Heart left ventricle (tissue), 16 donors: ENCODE measurements at regions of chr5 and their contacts with region 1.

Region 1: DNA sequence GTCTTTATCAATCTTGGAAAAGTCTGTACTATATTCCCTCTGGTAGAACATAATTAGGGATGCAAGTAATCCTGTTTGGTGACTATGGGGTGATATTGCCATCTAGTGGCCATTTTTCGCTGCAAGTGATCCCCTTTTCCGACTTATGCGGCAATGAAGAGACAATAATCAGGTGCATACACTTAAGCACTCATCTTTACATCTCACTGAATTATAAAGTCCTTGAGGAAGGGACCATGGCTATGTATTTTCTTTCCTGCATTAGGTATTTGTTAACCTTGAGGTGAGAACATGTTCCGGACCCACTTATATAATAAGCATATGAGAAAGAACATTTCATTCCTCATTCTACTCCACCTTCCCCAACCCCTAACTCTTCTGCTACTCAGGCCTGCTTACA is 19.6 kb upstream of the LIX1 start:
- DNase-seq: peak in 3 of 5 donors; percentile 33 to 59 (median 44)
- ATAC-seq: peak in 3 of 4 donors; percentile 71 to 77 (median 76)
- H3K4me3 ChIP-seq: no peak overlapping the region
- H3K27ac ChIP-seq: no peak overlapping the region
- H3K4me1 ChIP-seq: peaks cover 0 to 6% (median 0%) of the 10 kb centered on the region in 12 donors
- H3K27me3 ChIP-seq: no peaks in the 10 kb centered on the region
- CTCF ChIP-seq: peak; percentile 81 to 95 (median 89)
- POLR2A ChIP-seq: no peak

Region 2: DNA sequence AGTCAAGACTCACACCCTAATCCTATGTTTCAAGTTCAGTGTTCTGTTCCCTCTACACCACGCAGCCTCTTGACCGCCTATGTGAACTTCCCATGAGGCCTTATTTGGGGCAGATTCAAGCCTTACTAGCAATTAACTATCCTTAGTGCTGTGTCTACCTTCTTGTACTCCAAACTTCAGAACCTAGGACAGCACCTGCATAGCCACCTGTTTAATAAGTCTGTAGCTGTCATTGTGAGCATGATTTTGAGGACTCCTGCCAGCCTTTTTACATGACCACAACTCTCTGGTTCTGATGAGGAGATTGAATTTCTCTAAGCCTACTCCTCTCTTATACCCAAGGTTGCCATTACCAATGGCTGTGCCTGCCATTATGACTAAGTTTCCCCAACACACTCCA is 678.2 kb before region 1 on chr5:
- intact Hi-C with region 1: no loop called
- DNase-seq: no peak
- ATAC-seq: peak in 1 of 4 donors; percentile 45
- H3K4me3 ChIP-seq: no peak overlapping the region
- H3K27ac ChIP-seq: no peak overlapping the region
- H3K4me1 ChIP-seq: no peaks in the 10 kb centered on the region
- H3K27me3 ChIP-seq: no peaks in the 10 kb centered on the region
- CTCF ChIP-seq: no peak
- POLR2A ChIP-seq: no peak

Region 3: GRCh38 chr5:96601811-96602244 is 560.2 kb before region 1 on chr5:
- intact Hi-C with region 1: loop called in 1 of 10 experiments (anchors 10 kb)
- DNase-seq: peak in 2 of 5 donors; percentile 37 to 48
- ATAC-seq: peak; percentile 68 to 92 (median 85)
- H3K4me3 ChIP-seq: peak overlapping the region in 3 of 12 donors; percentile 15 to 27 (median 27)
- H3K27ac ChIP-seq: no peak overlapping the region
- H3K4me1 ChIP-seq: peaks cover 0 to 9% (median 0%) of the 10 kb centered on the region in 12 donors
- H3K27me3 ChIP-seq: no peaks in the 10 kb centered on the region
- CTCF ChIP-seq: peak; percentile 76 to 90 (median 82)
- POLR2A ChIP-seq: no peak

Region 4: GRCh38 chr5:96781031-96781937 is 380.8 kb before region 1 on chr5:
- intact Hi-C with region 1: loop called in 1 of 10 experiments (anchors 10 kb)
- DNase-seq: no peak
- ATAC-seq: peak in 3 of 4 donors; percentile 21 to 28 (median 24)
- H3K4me3 ChIP-seq: no peak overlapping the region
- H3K27ac ChIP-seq: peak overlapping the region in 8 of 12 donors; percentile 5 to 70 (median 24)
- H3K4me1 ChIP-seq: peaks cover 0 to 40% (median 14%) of the 10 kb centered on the region in 12 donors
- H3K27me3 ChIP-seq: no peaks in the 10 kb centered on the region
- CTCF ChIP-seq: no peak
- POLR2A ChIP-seq: no peak

Region 5: GRCh38 chr5:96997265-96997859 is 164.7 kb before region 1 on chr5:
- intact Hi-C with region 1: loop called in 8 of 10 experiments (anchors 2 to 10 kb)
- DNase-seq: no peak
- ATAC-seq: peak in 1 of 4 donors; percentile 61
- H3K4me3 ChIP-seq: no peak overlapping the region
- H3K27ac ChIP-seq: no peak overlapping the region
- H3K4me1 ChIP-seq: no peaks in the 10 kb centered on the region
- H3K27me3 ChIP-seq: no peaks in the 10 kb centered on the region
- CTCF ChIP-seq: peak in 11 of 12 donors; percentile 27 to 66 (median 49)
- POLR2A ChIP-seq: no peak